Activated CD4-positive, alpha-beta memory T cell treated with anti-CD3 and anti-CD28 coated beads for 36 hours (primary cell): ENCODE measurements at regions of chr12 and their contacts with region 1.

Region 1: DNA sequence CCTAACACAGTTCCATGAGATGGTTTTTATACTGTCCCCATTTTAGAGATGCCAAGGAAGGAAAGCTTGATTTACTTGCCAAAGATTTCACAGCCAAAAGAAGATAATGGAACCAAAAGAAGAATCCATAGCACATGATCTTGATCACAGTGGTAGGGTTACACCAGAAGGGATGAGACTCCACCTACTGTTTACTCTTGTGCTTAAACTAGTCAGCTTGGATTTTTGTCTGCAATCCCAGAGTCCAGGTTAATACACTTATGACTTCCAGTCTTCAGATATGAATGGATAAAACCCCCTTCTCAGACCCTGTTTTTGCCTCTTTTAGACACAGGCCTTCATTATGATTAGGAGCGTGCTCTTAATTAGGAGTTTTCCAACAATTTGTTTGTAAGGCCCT is 454.2 kb downstream of the AEBP2 start:
- DNase-seq: no peak
- H3K4me3 Mint-ChIP-seq: no peak overlapping the region
- H3K27ac Mint-ChIP-seq: no peak overlapping the region
- H3K4me1 Mint-ChIP-seq: peaks cover 20% of the 10 kb centered on the region
- H3K27me3 Mint-ChIP-seq: no peaks in the 10 kb centered on the region

Region 2: DNA sequence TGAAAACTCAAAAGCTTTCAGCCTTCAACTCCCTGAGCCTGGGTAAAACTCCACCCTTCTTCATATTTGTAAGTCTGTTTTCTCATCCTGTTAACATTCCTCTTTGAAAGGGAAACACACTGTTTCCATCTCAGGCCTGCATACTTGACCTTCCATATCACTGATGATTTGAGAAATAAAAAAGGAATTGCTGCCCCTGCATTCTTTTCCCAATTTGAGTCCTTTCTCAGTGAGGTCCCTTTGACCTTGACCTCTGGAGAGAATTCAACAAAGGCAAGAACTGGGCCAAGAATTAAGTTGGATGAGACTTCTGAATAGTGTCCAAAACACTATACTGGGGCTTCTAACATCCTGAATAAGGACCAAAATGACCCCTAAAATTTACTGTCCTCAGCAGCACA is 346.2 kb before region 1 on chr12:
- CTCF ChIA-PET with region 1: no interaction called
- POLR2A ChIA-PET with region 1: no interaction called
- intact Hi-C with region 1: loop called (anchors 1 kb)
- DNase-seq: no peak
- H3K4me3 Mint-ChIP-seq: no peak overlapping the region
- H3K27ac Mint-ChIP-seq: no peak overlapping the region
- H3K4me1 Mint-ChIP-seq: peaks cover 4% of the 10 kb centered on the region
- H3K27me3 Mint-ChIP-seq: no peaks in the 10 kb centered on the region

Region 3: DNA sequence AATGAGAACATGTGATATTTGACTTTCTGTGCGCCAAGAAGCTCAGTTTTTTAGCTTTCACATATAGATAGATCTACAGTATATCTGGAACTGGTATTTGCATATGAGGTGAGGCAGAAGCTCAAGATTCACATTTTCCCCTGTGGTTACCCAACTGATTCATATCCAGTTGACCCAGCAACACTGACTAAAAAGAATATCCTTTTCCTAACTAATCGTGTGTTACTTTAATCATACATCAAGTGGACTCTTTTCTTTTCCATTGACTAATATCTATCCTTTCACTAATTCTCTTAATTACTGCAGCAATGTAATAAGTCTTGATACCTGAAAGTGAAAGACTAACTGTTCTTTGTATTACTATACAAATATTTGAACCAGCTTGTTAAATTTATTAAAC is 218.2 kb before region 1 on chr12:
- CTCF ChIA-PET with region 1: no interaction called
- POLR2A ChIA-PET with region 1: no interaction called
- intact Hi-C with region 1: loop called (anchors 2 kb)
- DNase-seq: no peak
- H3K4me3 Mint-ChIP-seq: no peak overlapping the region
- H3K27ac Mint-ChIP-seq: no peak overlapping the region
- H3K4me1 Mint-ChIP-seq: peaks cover 32% of the 10 kb centered on the region
- H3K27me3 Mint-ChIP-seq: no peaks in the 10 kb centered on the region

Region 4: DNA sequence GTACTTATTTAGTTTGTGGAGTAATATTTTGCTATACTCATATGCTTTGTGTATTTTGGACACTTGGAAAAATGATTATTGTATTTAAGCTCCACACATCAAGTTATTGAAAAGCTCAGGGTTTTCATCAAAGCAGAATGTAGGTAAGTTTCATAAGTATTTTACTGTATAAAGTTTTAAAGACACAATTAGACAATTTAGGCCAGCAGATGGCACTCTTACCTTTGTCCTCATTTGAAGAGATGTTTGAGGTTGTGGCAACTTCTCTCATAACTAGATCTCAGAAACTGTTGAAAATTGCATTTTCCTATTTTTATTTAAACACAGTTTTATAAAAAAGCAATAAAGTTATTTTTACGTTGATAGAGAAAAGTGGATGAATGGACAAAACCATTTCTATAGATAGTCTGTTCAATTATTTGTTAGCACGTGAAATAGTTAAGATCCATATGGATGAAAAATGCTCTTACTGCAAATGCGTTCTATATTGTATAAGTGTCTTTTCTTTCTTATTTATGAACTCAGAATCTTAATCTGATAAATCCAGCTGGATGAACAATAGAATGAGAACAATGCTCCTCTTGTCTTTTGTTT is 154.2 kb before region 1 on chr12:
- CTCF ChIA-PET with region 1: interaction called, 6 read pairs
- POLR2A ChIA-PET with region 1: no interaction called
- intact Hi-C with region 1: loop called (anchors 5 kb)
- DNase-seq: no peak
- H3K4me3 Mint-ChIP-seq: no peak overlapping the region
- H3K27ac Mint-ChIP-seq: no peak overlapping the region
- H3K4me1 Mint-ChIP-seq: no peaks in the 10 kb centered on the region
- H3K27me3 Mint-ChIP-seq: peaks cover 1% of the 10 kb centered on the region

Region 5: GRCh38 chr12:19757317-19757877 is 136.1 kb before region 1 on chr12:
- CTCF ChIA-PET with region 1: interaction called, 11 read pairs
- POLR2A ChIA-PET with region 1: no interaction called
- intact Hi-C with region 1: loop called (anchors 1 kb)
- DNase-seq: no peak
- H3K4me3 Mint-ChIP-seq: no peak overlapping the region
- H3K27ac Mint-ChIP-seq: no peak overlapping the region
- H3K4me1 Mint-ChIP-seq: peaks cover 15% of the 10 kb centered on the region
- H3K27me3 Mint-ChIP-seq: peaks cover 4% of the 10 kb centered on the region

Region 6: GRCh38 chr12:19800884-19801283 is 92.6 kb before region 1 on chr12:
- CTCF ChIA-PET with region 1: interaction called, 4 read pairs
- POLR2A ChIA-PET with region 1: interaction called, 5 read pairs
- intact Hi-C with region 1: loop called (anchors 1 kb)
- DNase-seq: no peak
- H3K4me3 Mint-ChIP-seq: no peak overlapping the region
- H3K27ac Mint-ChIP-seq: peak overlapping the region; percentile 1
- H3K4me1 Mint-ChIP-seq: peaks cover 26% of the 10 kb centered on the region
- H3K27me3 Mint-ChIP-seq: no peaks in the 10 kb centered on the region

Region 7: DNA sequence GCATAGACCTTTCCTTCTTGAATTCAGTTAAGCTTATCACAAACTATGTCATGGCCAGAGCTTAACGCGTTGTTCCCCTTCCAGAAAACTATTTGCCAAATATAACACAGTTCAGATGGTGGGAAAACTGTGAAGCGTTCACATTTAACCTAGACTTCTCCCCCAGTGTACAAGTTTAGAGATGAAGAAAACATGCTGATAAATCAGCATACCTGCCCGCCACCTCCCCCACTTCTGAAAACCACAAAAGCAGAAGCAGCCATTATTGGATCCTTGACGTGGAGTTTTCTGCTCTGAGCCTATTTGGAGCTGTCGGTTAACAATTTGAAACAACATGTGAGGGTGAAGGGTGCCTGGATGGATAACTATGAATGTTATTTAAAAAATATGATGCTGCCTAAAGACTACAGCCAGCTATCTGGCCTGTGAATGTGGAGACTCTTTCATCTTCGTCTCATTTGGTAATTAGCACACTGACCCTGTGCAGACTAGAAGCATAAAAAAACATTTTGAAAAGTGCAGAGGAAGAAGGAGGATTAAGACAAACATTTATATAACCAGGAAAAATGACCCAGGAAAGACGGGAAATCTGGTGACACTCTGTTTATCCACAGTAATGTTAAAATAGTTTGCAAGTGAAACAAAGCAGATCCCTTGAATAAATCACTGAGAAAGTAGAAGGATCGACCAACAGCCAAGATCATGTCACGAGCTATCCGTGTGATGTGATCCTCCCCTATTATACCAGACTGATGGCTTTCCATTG is 46.0 kb before region 1 on chr12:
- CTCF ChIA-PET with region 1: no interaction called
- POLR2A ChIA-PET with region 1: interaction called, 5 read pairs
- intact Hi-C with region 1: loop called (anchors 2 kb)
- DNase-seq: no peak
- H3K4me3 Mint-ChIP-seq: no peak overlapping the region
- H3K27ac Mint-ChIP-seq: no peak overlapping the region
- H3K4me1 Mint-ChIP-seq: peaks cover 43% of the 10 kb centered on the region
- H3K27me3 Mint-ChIP-seq: no peaks in the 10 kb centered on the region

Region 8: GRCh38 chr12:19946549-19946948 is 53.0 kb after region 1 on chr12:
- CTCF ChIA-PET with region 1: no interaction called
- POLR2A ChIA-PET with region 1: no interaction called
- intact Hi-C with region 1: no loop called
- DNase-seq: no peak
- H3K4me3 Mint-ChIP-seq: no peak overlapping the region
- H3K27ac Mint-ChIP-seq: no peak overlapping the region
- H3K4me1 Mint-ChIP-seq: no peaks in the 10 kb centered on the region
- H3K27me3 Mint-ChIP-seq: no peaks in the 10 kb centered on the region